ENCODE measurements at regions of chr9 and their contacts with region 1.

Region 1: GRCh38 chr9:78439190-78439865 is 142.4 kb downstream of the PSAT1 start:
- H3K4me3 ChIP-seq: no peak overlapping the region
- H3K27ac ChIP-seq: no peak overlapping the region
- H3K4me1 ChIP-seq: no peaks in the 10 kb centered on the region
- CTCF ChIP-seq: peak; percentile 70

Region 2: GRCh38 chr9:78599926-78600325 is 160.6 kb after region 1 on chr9:
- CTCF ChIA-PET with region 1: interaction called, 10 read pairs
- POLR2A ChIA-PET with region 1: no interaction called
- H3K4me3 ChIP-seq: no peak overlapping the region
- H3K27ac ChIP-seq: no peak overlapping the region
- H3K4me1 ChIP-seq: no peaks in the 10 kb centered on the region
- CTCF ChIP-seq: no peak